ENCODE measurements at regions of chr7 and their contacts with region 1.

Region 1: GRCh38 chr7:101244375-101245146 is at the start of gene FIS1:
- DNase-seq: peak; percentile 74 to 95
- H3K4me3 ChIP-seq: peak within 1 kb of the TSS; percentile 98
- H3K27ac ChIP-seq: peak within 1 kb of the TSS; percentile 52
- H3K4me1 ChIP-seq: peaks cover 16% of the 10 kb centered on the region
- H3K27me3 ChIP-seq: no peaks in the 10 kb centered on the region
- CTCF ChIP-seq: peak; percentile 63
- total RNA-seq, gene FIS1: 184 and 200 TPM in 2 replicates

Region 2: GRCh38 chr7:101116898-101117297 is 127.7 kb before region 1 on chr7:
- CTCF ChIA-PET with region 1: no interaction called
- POLR2A ChIA-PET with region 1: interaction called, 25 read pairs
- intact Hi-C with region 1: no loop called
- DNase-seq: no peak
- H3K4me3 ChIP-seq: no peak overlapping the region
- H3K27ac ChIP-seq: peak overlapping the region; percentile 99
- H3K4me1 ChIP-seq: peaks cover 58% of the 10 kb centered on the region
- H3K27me3 ChIP-seq: no peaks in the 10 kb centered on the region
- CTCF ChIP-seq: no peak

Region 3: GRCh38 chr7:101159696-101160654 is 84.6 kb before region 1 on chr7:
- CTCF ChIA-PET with region 1: interaction called, 12 read pairs
- POLR2A ChIA-PET with region 1: no interaction called
- intact Hi-C with region 1: no loop called
- DNase-seq: no peak
- H3K4me3 ChIP-seq: no peak overlapping the region
- H3K27ac ChIP-seq: peak overlapping the region; percentile 51
- H3K4me1 ChIP-seq: peaks cover 78% of the 10 kb centered on the region
- H3K27me3 ChIP-seq: no peaks in the 10 kb centered on the region
- CTCF ChIP-seq: no peak